GM12878 (cell line): ENCODE measurements at regions of chr3 and their contacts with region 1.

Region 1: GRCh38 chr3:49339945-49340800 is at the start of gene USP4:
- DNase-seq: peak; percentile 87
- ATAC-seq: peak; percentile 92
- H3K4me3 ChIP-seq: peak within 1 kb of the TSS; percentile 89
- H3K27ac ChIP-seq: peak within 1 kb of the TSS; percentile 98
- H3K4me1 ChIP-seq: peaks cover 38% of the 10 kb centered on the region
- H3K27me3 ChIP-seq: no peaks in the 10 kb centered on the region
- CTCF ChIP-seq: peak; percentile 57 to 81 (median 77); a peak in 5 of 6 replicates
- EP300 ChIP-seq: peak; percentile 54 to 62; a peak in 2 of 4 replicates
- POLR2A ChIP-seq: peak; percentile 95
- RAD21 ChIP-seq: peak; percentile 73
- polyA plus RNA-seq, gene USP4: 40.3 to 49.3 TPM

Region 2: GRCh38 chr3:49104483-49105291 is 235.5 kb before region 1 on chr3 and contains the start of gene QARS1:
- CTCF ChIA-PET with region 1: no interaction called
- POLR2A ChIA-PET with region 1: interaction called, 10 read pairs
- RAD21 ChIA-PET with region 1: no interaction called
- SMC1A ChIA-PET with region 1: no interaction called
- in situ Hi-C with region 1: no loop called
- intact Hi-C with region 1: no loop called
- DNase-seq: peak; percentile 69
- ATAC-seq: peak; percentile 100
- H3K4me3 ChIP-seq: peak within 1 kb of the TSS; percentile 100
- H3K27ac ChIP-seq: peak within 1 kb of the TSS; percentile 92
- H3K4me1 ChIP-seq: peaks cover 11% of the 10 kb centered on the region
- H3K27me3 ChIP-seq: no peaks in the 10 kb centered on the region
- CTCF ChIP-seq: no peak
- EP300 ChIP-seq: no peak
- POLR2A ChIP-seq: peak; percentile 91
- RAD21 ChIP-seq: no peak
- polyA plus RNA-seq, gene QARS1: 229 to 328 TPM

Region 3: GRCh38 chr3:49327485-49327884 is 12.7 kb before region 1 on chr3:
- CTCF ChIA-PET with region 1: interaction called, 11 read pairs
- POLR2A ChIA-PET with region 1: interaction called, 6 read pairs
- RAD21 ChIA-PET with region 1: interaction called, 4 read pairs
- SMC1A ChIA-PET with region 1: interaction called, 5 read pairs
- in situ Hi-C with region 1: no loop called
- intact Hi-C with region 1: no loop called
- DNase-seq: no peak
- ATAC-seq: peak; percentile 61
- H3K4me3 ChIP-seq: no peak overlapping the region
- H3K27ac ChIP-seq: no peak overlapping the region
- H3K4me1 ChIP-seq: no peaks in the 10 kb centered on the region
- H3K27me3 ChIP-seq: no peaks in the 10 kb centered on the region
- CTCF ChIP-seq: peak; percentile 18 to 27 (median 22); a peak in 3 of 6 replicates
- EP300 ChIP-seq: no peak
- POLR2A ChIP-seq: no peak
- RAD21 ChIP-seq: peak; percentile 37; the same call in 1 of the 2 replicates

Region 4: DNA sequence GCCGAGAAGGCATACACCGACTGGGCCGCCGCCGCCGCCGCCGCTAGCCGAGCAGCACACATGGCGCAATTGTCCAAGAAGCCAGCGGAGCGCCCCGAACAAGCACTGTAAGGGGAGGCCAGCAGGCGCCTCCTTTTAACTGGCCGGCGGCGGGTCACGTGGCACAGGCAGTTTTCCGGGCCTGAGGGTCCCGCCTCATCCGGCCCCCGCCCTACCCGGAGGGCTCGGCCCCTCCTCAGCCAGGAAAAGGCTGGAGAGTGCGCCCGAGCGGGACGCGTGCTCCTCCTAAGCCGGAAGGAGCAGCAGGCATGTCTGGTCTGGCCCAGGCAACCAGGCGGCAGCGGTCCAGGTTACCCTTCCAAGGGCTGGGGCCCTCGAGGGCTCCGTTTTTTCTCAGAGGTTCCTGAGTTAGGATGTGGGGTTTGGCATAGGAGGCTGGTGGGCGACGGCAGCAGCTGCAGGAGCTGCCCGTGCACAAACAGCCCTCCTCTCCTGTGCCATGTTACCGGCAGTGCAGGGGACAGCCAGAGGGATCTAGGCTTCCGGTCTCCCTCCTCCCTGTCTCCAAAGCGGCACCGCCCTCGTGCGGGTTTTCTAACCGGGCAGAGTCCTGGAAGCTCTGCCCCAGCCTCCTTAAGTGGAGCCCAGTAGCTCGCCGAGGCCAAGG is 18.2 kb after region 1 on chr3 and contains the start of gene GPX1:
- CTCF ChIA-PET with region 1: interaction called, 32 read pairs
- POLR2A ChIA-PET with region 1: interaction called, 40 read pairs
- RAD21 ChIA-PET with region 1: interaction called, 31 read pairs
- SMC1A ChIA-PET with region 1: interaction called, 34 read pairs
- in situ Hi-C with region 1: no loop called
- intact Hi-C with region 1: loop called (anchors 1 kb)
- DNase-seq: peak; percentile 70
- ATAC-seq: peak; percentile 93
- H3K4me3 ChIP-seq: peak within 1 kb of the TSS; percentile 98
- H3K27ac ChIP-seq: peak within 1 kb of the TSS; percentile 96
- H3K4me1 ChIP-seq: peaks cover 11% of the 10 kb centered on the region
- H3K27me3 ChIP-seq: no peaks in the 10 kb centered on the region
- CTCF ChIP-seq: no peak
- EP300 ChIP-seq: no peak
- POLR2A ChIP-seq: peak; percentile 79
- RAD21 ChIP-seq: no peak
- polyA plus RNA-seq, gene GPX1: 32.0 to 174 TPM

Region 5: GRCh38 chr3:49411968-49412631 is 71.9 kb after region 1 on chr3 and contains the starts of genes RHOA and TCTA:
- CTCF ChIA-PET with region 1: interaction called, 18 read pairs
- POLR2A ChIA-PET with region 1: interaction called, 40 read pairs
- RAD21 ChIA-PET with region 1: interaction called, 21 read pairs
- SMC1A ChIA-PET with region 1: interaction called, 17 read pairs
- in situ Hi-C with region 1: no loop called
- intact Hi-C with region 1: loop called (anchors 1 kb)
- DNase-seq: peak; percentile 99
- ATAC-seq: peak; percentile 88
- H3K4me3 ChIP-seq: peak within 1 kb of the TSS; percentile 93
- H3K27ac ChIP-seq: peak within 1 kb of the TSS; percentile 96
- H3K4me1 ChIP-seq: peaks cover 31% of the 10 kb centered on the region
- H3K27me3 ChIP-seq: no peaks in the 10 kb centered on the region
- CTCF ChIP-seq: no peak
- EP300 ChIP-seq: no peak
- POLR2A ChIP-seq: peak; percentile 96
- RAD21 ChIP-seq: no peak
- polyA plus RNA-seq, gene RHOA: 696 to 1,049 TPM
- polyA plus RNA-seq, gene TCTA: 6.5 to 7.1 TPM

Region 6: DNA sequence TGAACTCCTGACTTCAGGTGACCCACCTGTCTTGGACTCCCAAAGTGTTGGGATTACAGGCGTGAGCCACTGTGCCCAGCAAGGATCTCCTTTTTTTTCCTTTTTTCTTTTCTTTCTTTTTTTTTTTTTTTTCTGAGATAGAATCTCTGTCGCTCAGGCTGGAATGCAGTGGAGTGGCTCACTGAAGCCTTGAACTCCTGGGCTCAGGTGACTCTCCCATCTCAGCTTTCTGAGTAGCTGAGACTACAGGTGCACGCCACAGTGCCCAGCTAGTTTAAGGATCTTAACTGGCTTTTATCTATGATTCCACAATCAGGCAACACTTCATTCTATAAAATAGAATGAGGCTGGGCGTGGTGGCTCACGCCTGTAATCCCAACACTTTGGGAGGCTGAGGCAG is 105.2 kb after region 1 on chr3:
- CTCF ChIA-PET with region 1: interaction called, 73 read pairs
- POLR2A ChIA-PET with region 1: interaction called, 19 read pairs
- RAD21 ChIA-PET with region 1: interaction called, 64 read pairs
- SMC1A ChIA-PET with region 1: interaction called, 25 read pairs
- in situ Hi-C with region 1: loop called (anchors 5 kb)
- intact Hi-C with region 1: loop called (anchors 1 kb)
- DNase-seq: no peak
- ATAC-seq: no peak
- H3K4me3 ChIP-seq: no peak overlapping the region
- H3K27ac ChIP-seq: no peak overlapping the region
- H3K4me1 ChIP-seq: peaks cover 17% of the 10 kb centered on the region
- H3K27me3 ChIP-seq: no peaks in the 10 kb centered on the region
- CTCF ChIP-seq: no peak
- EP300 ChIP-seq: no peak
- POLR2A ChIP-seq: no peak
- RAD21 ChIP-seq: no peak

Region 7: DNA sequence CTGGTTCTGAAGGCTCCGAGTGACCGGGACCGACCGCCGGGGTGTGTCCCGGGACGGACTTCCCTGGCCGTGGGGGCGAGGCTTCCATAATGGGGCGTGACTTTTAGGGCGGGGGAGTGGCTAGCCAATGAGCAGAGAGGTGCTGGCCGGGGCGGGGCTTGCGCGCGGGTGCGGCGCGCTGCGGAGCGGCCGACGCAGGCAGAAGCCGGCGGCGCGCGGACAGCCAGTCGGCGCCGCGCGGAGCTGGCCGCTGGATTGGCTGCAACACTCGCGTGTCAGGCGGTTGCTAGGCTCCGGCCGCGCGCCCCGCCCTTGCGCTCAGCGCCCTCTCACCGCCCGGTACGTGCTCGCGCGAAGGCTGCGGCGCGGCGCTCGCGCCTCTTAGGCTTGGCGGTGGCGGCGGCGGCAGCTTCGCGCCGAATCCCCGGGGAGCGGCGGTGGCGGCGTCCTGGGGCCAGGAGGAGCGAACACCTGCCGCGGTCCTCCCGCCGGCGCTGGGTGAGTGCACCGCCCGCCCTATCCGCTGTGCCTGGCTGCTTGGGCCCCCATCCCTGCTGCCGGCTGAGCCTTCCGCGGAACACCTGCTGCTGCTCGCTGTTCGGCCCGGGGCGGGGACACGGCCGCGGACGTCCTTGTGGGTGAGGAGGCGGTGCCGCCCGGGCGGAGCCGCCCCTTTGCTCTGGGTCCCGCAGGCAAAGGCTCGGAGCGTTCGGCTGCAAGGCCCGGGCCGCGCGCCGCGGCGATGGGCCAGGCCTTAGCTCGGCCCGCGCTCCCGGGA is 130.0 kb after region 1 on chr3 and contains the start of gene DAG1:
- CTCF ChIA-PET with region 1: interaction called, 9 read pairs
- POLR2A ChIA-PET with region 1: interaction called, 9 read pairs
- RAD21 ChIA-PET with region 1: interaction called, 12 read pairs
- SMC1A ChIA-PET with region 1: interaction called, 3 read pairs
- in situ Hi-C with region 1: no loop called
- intact Hi-C with region 1: no loop called
- DNase-seq: peak; percentile 75
- ATAC-seq: peak; percentile 94
- H3K4me3 ChIP-seq: peak within 1 kb of the TSS; percentile 91
- H3K27ac ChIP-seq: peak within 1 kb of the TSS; percentile 95
- H3K4me1 ChIP-seq: peaks cover 17% of the 10 kb centered on the region
- H3K27me3 ChIP-seq: no peaks in the 10 kb centered on the region
- CTCF ChIP-seq: no peak
- EP300 ChIP-seq: 0 out of 4 replicates have a peak, but pooled peaks of 1 of the 2 experiments have one; percentile 15
- POLR2A ChIP-seq: peak; percentile 90
- RAD21 ChIP-seq: no peak
- polyA plus RNA-seq, gene DAG1: 0.33 to 0.37 TPM

Region 8: DNA sequence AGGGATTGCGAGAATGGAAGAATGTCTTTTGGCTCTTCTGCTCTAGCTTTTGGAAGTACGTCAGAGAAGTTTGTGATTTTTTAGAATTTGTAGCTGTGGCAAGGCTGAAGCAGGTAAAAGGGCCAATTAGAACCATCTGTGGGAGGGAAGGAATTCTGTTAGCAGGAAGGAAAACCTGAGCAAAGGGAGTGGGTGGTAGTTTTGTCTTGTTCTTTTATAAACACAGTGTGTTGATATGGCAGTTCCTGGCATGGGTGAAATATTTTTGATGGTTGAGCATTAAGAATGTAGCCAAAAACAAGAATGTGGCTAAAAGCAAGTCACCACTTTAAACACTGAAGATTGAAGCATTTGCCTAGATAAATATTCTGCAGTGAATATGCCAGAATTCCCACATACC is 153.7 kb after region 1 on chr3:
- CTCF ChIA-PET with region 1: no interaction called
- POLR2A ChIA-PET with region 1: no interaction called
- RAD21 ChIA-PET with region 1: no interaction called
- SMC1A ChIA-PET with region 1: no interaction called
- in situ Hi-C with region 1: no loop called
- intact Hi-C with region 1: no loop called
- DNase-seq: no peak
- ATAC-seq: no peak
- H3K4me3 ChIP-seq: no peak overlapping the region
- H3K27ac ChIP-seq: no peak overlapping the region
- H3K4me1 ChIP-seq: peaks cover 7% of the 10 kb centered on the region
- H3K27me3 ChIP-seq: no peaks in the 10 kb centered on the region
- CTCF ChIP-seq: no peak
- EP300 ChIP-seq: no peak
- POLR2A ChIP-seq: no peak
- RAD21 ChIP-seq: no peak